Dorsolateral prefrontal cortex (tissue), 120 donors: ENCODE measurements at regions of chr3 and their contacts with region 1.

Region 1: GRCh38 chr3:16290007-16290826 is 25.2 kb downstream of the OXNAD1 start:
- DNase-seq: peak in 2 of 10 donors; percentile 54 to 56
- H3K4me3 ChIP-seq: no peak overlapping the region
- H3K27ac ChIP-seq: peak overlapping the region in 21 of 59 donors; percentile 5 to 55 (median 33)
- H3K27me3 ChIP-seq: no peaks in the 10 kb centered on the region
- CTCF ChIP-seq: peak; percentile 68 to 98 (median 87)

Region 2: GRCh38 chr3:16550676-16551341 is 260.6 kb after region 1 on chr3:
- intact Hi-C with region 1: loop called (anchors 1 kb)
- DNase-seq: peak in 7 of 10 donors; percentile 31 to 77 (median 53)
- H3K4me3 ChIP-seq: peak overlapping the region in 49 of 59 donors; percentile 8 to 56 (median 33)
- H3K27ac ChIP-seq: no peak overlapping the region
- H3K27me3 ChIP-seq: no peaks in the 10 kb centered on the region
- CTCF ChIP-seq: peak; percentile 54 to 97 (median 91)